Naive thymus-derived CD4-positive, alpha-beta T cell (primary cell): ENCODE measurements at regions of chr3 and their contacts with region 1.

Region 1: GRCh38 chr3:170869645-170870593 is at the start of gene RPL22L1:
- DNase-seq: peak; percentile 83 to 92 (median 90)
- ATAC-seq: peak; percentile 96
- H3K4me3 ChIP-seq: peak within 1 kb of the TSS; percentile 84
- H3K4me3 Mint-ChIP-seq: peak within 1 kb of the TSS; percentile 93 to 98 (median 94)
- H3K27ac ChIP-seq: peak within 1 kb of the TSS; percentile 86
- H3K27ac Mint-ChIP-seq: peak within 1 kb of the TSS; percentile 96 to 99 (median 98)
- H3K4me1 ChIP-seq: peaks cover 22% of the 10 kb centered on the region in 2 donors
- H3K4me1 Mint-ChIP-seq: peaks cover 10 to 41% (median 26%) of the 10 kb centered on the region in 7 donors
- H3K27me3 ChIP-seq: no peaks in the 10 kb centered on the region
- H3K27me3 Mint-ChIP-seq: peaks cover 0 to 4% (median 0%) of the 10 kb centered on the region in 5 donors
- total RNA-seq, gene RPL22L1: 27.5 to 62.6 (median 47.9) TPM

Region 2: DNA sequence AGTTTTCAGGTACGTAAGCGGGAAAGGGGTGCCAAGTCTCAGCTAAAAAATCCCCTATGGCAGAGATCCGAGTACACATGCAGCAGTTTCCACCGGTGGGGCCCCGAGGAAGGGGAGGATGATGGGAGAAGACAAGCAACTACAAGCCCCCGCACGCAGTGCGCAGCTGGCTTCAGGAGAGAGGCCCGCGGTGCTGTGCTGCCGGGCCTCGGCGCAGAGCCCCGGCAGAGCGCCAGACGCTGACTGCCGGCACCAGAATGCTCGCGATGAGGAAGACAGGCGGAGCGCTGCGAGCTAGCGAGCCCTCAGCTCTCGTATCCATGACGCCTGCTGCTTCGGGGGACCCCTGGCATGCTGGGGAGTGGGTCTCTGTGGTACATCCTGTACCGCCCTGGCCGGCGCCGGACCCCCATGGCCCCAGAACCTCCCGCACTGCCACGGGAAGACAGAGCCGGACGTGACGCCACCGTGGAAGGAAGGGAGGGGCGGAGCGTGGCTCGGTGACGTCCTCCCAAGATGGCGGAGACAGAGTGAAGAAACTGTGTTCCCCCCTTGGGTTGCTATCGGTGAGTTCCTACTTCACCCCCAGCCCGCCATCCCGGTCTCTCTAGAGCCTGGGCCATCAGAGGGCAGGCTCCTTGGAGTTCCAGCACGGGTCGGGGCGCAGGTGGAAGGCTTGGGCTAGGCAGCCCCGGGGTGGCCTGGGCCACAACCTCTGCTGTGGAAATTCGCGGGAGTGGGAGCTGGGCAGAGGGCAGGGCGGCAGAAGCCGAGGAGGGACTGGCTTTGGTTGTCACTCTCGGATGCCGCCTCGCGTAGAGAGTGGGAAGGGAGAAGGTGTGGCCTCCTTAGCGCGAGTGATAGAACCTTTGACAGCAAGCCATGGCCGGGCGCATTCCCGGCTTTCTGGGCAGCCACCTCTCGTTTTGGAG is 1096.8 kb before region 1 on chr3 and contains the start of gene MYNN:
- CTCF ChIA-PET with region 1: no interaction called
- POLR2A ChIA-PET with region 1: interaction called, 6 read pairs
- intact Hi-C with region 1: loop called in 1 of 2 experiments (anchors 2 kb)
- DNase-seq: peak; percentile 87 to 95 (median 93)
- ATAC-seq: peak; percentile 90
- H3K4me3 ChIP-seq: peak within 1 kb of the TSS; percentile 87
- H3K4me3 Mint-ChIP-seq: peak within 1 kb of the TSS; percentile 91 to 99 (median 97)
- H3K27ac ChIP-seq: peak within 1 kb of the TSS; percentile 100
- H3K27ac Mint-ChIP-seq: peak within 1 kb of the TSS; percentile 96 to 100 (median 99)
- H3K4me1 ChIP-seq: peaks cover 15 to 22% of the 10 kb centered on the region in 2 donors
- H3K4me1 Mint-ChIP-seq: peaks cover 18 to 69% (median 56%) of the 10 kb centered on the region in 7 donors
- H3K27me3 ChIP-seq: no peaks in the 10 kb centered on the region
- H3K27me3 Mint-ChIP-seq: peaks cover 0 to 5% (median 0%) of the 10 kb centered on the region in 5 donors
- total RNA-seq, gene MYNN: 16.2 to 20.8 (median 19.0) TPM

Region 3: GRCh38 chr3:170811928-170812591 is 57.9 kb before region 1 on chr3:
- CTCF ChIA-PET with region 1: no interaction called
- POLR2A ChIA-PET with region 1: no interaction called
- intact Hi-C with region 1: loop called (anchors 1 kb)
- DNase-seq: peak; percentile 17 to 77 (median 68)
- ATAC-seq: peak; percentile 92
- H3K4me3 ChIP-seq: no peak overlapping the region
- H3K4me3 Mint-ChIP-seq: no peak overlapping the region
- H3K27ac ChIP-seq: no peak overlapping the region
- H3K27ac Mint-ChIP-seq: no peak overlapping the region
- H3K4me1 ChIP-seq: no peaks in the 10 kb centered on the region
- H3K4me1 Mint-ChIP-seq: peaks cover 0 to 8% (median 0%) of the 10 kb centered on the region in 7 donors
- H3K27me3 ChIP-seq: no peaks in the 10 kb centered on the region
- H3K27me3 Mint-ChIP-seq: peaks cover 0 to 6% (median 0%) of the 10 kb centered on the region in 5 donors

Region 4: DNA sequence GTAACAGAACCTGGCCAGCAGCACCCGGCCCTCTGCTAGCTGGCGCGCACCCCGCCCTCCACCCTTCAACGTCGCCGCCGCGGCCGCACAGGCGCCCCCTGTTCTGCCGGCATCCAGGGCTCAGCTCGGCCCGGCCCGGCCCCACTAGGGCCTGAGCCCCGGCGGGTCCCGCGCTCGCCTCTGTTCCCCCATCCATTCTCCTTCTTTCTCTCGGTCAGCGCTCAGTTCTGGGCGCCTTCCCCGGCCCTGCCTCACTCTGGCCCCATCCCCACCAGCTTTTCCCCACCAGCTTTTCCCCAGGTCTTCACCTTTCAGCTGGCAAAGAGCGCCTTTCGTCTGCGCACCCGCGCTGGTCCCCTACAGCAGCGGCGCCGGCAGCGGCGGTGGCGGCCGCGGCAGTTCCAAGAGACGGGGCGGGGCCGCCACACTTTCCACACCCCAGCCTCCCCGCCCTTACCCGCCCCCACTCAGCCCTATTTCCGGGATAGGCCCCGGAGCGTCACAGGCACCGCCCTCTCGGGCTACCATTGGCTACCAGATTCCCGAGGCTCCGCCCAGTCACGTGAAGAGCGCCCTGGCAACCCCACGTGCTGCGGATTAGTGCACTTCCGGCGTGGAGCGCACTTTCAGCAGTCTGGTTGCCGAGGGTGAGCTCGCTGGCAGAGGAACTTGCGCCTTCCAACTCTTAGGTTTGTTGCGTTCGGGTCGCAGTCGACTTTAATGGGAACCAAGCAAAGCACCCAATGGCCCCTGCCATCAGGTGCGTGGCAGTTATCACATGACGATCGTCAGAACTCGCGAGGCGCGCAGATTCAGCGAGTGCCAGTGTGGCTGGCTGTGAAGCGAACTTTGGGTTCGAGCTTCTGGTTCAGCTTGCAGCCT is 38.6 kb after region 1 on chr3 and contains the start of gene EIF5A2:
- CTCF ChIA-PET with region 1: interaction called, 3 read pairs
- POLR2A ChIA-PET with region 1: interaction called, 35 read pairs
- intact Hi-C with region 1: loop called (anchors 1 kb)
- DNase-seq: peak; percentile 87 to 97 (median 94)
- ATAC-seq: peak; percentile 98
- H3K4me3 ChIP-seq: peak within 1 kb of the TSS; percentile 50
- H3K4me3 Mint-ChIP-seq: peak within 1 kb of the TSS; percentile 90 to 98 (median 96)
- H3K27ac ChIP-seq: peak within 1 kb of the TSS; percentile 68
- H3K27ac Mint-ChIP-seq: peak within 1 kb of the TSS; percentile 89 to 96 (median 94)
- H3K4me1 ChIP-seq: peaks cover 15 to 16% of the 10 kb centered on the region in 2 donors
- H3K4me1 Mint-ChIP-seq: peaks cover 0 to 31% (median 22%) of the 10 kb centered on the region in 7 donors
- H3K27me3 ChIP-seq: no peaks in the 10 kb centered on the region
- H3K27me3 Mint-ChIP-seq: peaks cover 0 to 19% (median 0%) of the 10 kb centered on the region in 5 donors
- total RNA-seq, gene EIF5A2: 5.5 to 9.8 (median 7.4) TPM

Region 5: GRCh38 chr3:171077261-171077660 is 207.3 kb after region 1 on chr3:
- CTCF ChIA-PET with region 1: no interaction called
- POLR2A ChIA-PET with region 1: no interaction called
- intact Hi-C with region 1: loop called in 1 of 2 experiments (anchors 5 kb)
- DNase-seq: no peak
- ATAC-seq: no peak
- H3K4me3 ChIP-seq: no peak overlapping the region
- H3K4me3 Mint-ChIP-seq: no peak overlapping the region
- H3K27ac ChIP-seq: no peak overlapping the region
- H3K27ac Mint-ChIP-seq: peak overlapping the region in 3 of 9 donors; percentile 12 to 72 (median 44)
- H3K4me1 ChIP-seq: no peaks in the 10 kb centered on the region
- H3K4me1 Mint-ChIP-seq: peaks cover 0 to 5% (median 0%) of the 10 kb centered on the region in 7 donors
- H3K27me3 ChIP-seq: no peaks in the 10 kb centered on the region
- H3K27me3 Mint-ChIP-seq: no peaks in the 10 kb centered on the region